ENCODE measurements at regions of chr14 and their contacts with region 1.

Region 1: GRCh38 chr14:100654814-100655740 is 67.9 kb upstream of the BEGAIN start:
- DNase-seq: peak; percentile 59
- ATAC-seq: peak; percentile 78
- H3K4me3 Mint-ChIP-seq: no peak overlapping the region
- H3K27ac Mint-ChIP-seq: no peak overlapping the region
- H3K4me1 Mint-ChIP-seq: peaks cover 7% of the 10 kb centered on the region
- H3K27me3 Mint-ChIP-seq: peaks cover 6% of the 10 kb centered on the region

Region 2: DNA sequence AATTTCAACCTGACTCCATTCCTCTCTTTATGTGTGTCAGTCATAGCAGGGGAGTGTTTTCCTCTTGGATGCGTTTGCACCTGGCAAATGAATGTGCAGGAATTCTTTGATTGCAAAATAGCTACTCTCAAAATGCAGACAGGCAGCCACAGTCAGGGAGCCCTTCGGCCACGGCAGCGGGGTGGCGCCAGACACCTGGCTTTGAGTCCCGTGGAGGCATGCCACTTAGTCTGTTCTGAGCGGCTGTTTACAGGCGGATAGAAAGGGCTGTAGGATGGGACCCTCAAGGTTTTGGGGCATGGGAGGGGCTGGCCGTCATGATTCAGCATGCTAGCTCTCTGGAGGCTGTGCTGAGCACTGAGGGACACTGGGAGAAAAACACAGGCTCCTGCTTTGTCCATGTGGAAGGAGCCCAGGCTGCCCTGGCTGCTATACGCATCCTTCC is 214.9 kb before region 1 on chr14:
- CTCF ChIA-PET with region 1: interaction called, 13 read pairs
- POLR2A ChIA-PET with region 1: no interaction called
- intact Hi-C with region 1: no loop called
- DNase-seq: peak; percentile 68
- ATAC-seq: no peak
- H3K4me3 Mint-ChIP-seq: no peak overlapping the region
- H3K27ac Mint-ChIP-seq: no peak overlapping the region
- H3K4me1 Mint-ChIP-seq: peaks cover 36% of the 10 kb centered on the region
- H3K27me3 Mint-ChIP-seq: no peaks in the 10 kb centered on the region

Region 3: DNA sequence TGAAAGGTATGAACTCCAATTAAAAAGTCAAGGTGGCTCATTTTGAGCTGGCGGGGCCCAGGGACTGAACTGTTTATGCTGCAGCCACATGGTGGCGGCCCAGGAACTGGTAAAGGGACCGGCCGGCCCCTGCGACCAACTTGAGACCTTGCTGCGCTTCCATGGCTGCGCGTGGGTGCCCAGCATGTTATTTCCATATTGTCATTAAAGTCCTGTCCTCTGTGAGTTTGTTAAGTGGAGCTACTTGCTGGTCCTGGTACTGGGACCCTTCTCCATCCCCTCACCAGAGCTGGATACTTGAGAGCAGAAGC is 130.2 kb before region 1 on chr14:
- CTCF ChIA-PET with region 1: interaction called, 17 read pairs
- POLR2A ChIA-PET with region 1: no interaction called
- intact Hi-C with region 1: no loop called
- DNase-seq: peak; percentile 74
- ATAC-seq: peak; percentile 65
- H3K4me3 Mint-ChIP-seq: no peak overlapping the region
- H3K27ac Mint-ChIP-seq: no peak overlapping the region
- H3K4me1 Mint-ChIP-seq: no peaks in the 10 kb centered on the region
- H3K27me3 Mint-ChIP-seq: no peaks in the 10 kb centered on the region

Region 4: GRCh38 chr14:100955201-100955600 is 300.1 kb after region 1 on chr14:
- CTCF ChIA-PET with region 1: no interaction called
- POLR2A ChIA-PET with region 1: no interaction called
- intact Hi-C with region 1: no loop called
- DNase-seq: no peak
- ATAC-seq: no peak
- H3K4me3 Mint-ChIP-seq: no peak overlapping the region
- H3K27ac Mint-ChIP-seq: no peak overlapping the region
- H3K4me1 Mint-ChIP-seq: no peaks in the 10 kb centered on the region
- H3K27me3 Mint-ChIP-seq: peaks cover 6% of the 10 kb centered on the region

Region 5: DNA sequence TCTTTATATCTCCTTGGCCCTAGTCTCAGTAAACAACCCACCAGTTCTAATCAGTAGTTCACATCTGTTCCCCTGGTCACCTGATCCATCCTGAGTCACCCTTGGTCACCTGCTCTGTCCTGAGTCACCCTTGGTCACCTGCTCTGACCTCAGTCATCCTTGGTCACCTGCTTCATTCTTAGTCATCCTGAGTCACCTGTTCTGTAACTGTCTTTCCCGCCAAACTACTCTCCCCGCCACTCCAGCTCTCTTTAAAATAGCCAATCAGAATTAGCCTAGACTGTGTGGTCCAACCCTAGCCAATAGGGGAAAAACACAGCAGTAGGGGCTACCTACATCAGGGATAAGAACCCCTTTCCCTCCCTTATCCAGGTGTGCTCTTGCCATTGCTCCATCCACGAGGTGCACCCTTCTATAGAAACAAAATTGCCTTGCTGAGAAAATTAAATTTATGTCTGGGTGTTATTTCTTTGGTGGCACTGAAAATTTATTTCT is 660.8 kb after region 1 on chr14:
- CTCF ChIA-PET with region 1: no interaction called
- POLR2A ChIA-PET with region 1: no interaction called
- intact Hi-C with region 1: no loop called
- DNase-seq: peak; percentile 8
- ATAC-seq: no peak
- H3K4me3 Mint-ChIP-seq: no peak overlapping the region
- H3K27ac Mint-ChIP-seq: no peak overlapping the region
- H3K4me1 Mint-ChIP-seq: no peaks in the 10 kb centered on the region
- H3K27me3 Mint-ChIP-seq: peaks cover 8% of the 10 kb centered on the region

Measured in activated CD4-positive, alpha-beta T cell treated with anti-CD3 and anti-CD28 coated beads for 36 hours (primary cell).